Heart right ventricle (tissue), 16 donors: ENCODE measurements at regions of chr2 and their contacts with region 1.

Region 1: DNA sequence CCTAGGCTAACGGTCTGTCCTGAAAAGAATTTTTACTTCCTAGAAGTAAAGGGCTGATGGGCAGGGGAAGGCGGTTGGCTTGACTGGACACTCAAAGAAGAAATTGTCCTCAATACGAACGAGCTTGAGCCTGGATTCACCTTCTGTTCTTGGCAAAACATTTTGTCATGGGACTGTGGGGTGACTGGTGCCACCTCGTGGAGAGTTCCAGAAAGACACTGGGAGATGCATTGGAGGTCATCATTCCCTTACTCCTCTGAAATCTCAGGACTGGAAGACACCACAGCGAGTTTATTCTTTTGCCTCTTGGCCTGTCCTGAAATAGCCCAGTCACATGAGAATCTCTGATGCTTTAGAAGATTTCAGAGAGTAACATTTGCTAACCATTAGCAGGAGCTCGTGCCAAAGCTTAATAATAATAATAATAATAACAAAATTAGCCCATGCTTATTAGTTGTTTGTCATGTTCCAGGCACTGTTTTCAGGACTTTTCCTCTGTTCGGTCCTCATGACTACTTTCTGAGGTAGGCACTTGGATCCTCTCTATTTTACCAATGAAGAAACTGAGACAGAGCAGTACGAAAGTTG is 44.5 kb downstream of the TMEM182 start:
- DNase-seq: peak; percentile 48 to 78
- ATAC-seq: peak; percentile 51 to 70 (median 66)
- H3K4me3 ChIP-seq: no peak overlapping the region
- H3K27ac ChIP-seq: peak overlapping the region in 6 of 10 donors; percentile 1 to 46 (median 36)
- H3K4me1 ChIP-seq: peaks cover 0 to 60% (median 18%) of the 10 kb centered on the region in 9 donors
- H3K27me3 ChIP-seq: no peaks in the 10 kb centered on the region
- CTCF ChIP-seq: peak; percentile 54 to 87 (median 80)

Region 2: DNA sequence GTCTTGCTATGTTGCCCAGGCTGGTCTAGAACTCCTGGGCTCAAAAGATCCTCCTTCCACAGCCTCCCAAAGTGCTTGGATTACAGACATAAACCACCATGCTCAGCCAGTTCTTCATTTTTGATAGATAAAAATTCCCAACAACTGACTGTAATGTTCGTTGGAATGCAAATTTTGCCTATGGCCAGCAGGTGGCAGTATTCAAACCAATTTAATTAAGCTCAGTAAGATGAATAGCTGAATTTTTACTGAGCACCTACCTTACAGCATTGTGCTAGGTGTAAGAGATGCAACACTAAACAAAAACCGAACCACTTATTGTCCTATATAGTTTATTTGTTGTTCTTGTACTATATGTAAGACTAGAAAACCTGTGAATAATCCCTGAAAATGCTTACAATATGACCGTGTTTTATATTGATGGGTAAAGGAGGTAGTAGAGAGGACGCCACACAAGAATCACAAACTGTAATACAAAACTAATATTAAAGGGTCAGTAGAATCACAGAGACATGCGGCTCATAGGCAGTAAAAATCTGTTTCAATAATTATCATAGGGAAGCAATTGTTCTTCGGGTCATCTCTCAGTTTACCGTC is 52.7 kb before region 1 on chr2:
- intact Hi-C with region 1: loop called (anchors 1 to 5 kb)
- DNase-seq: no peak
- ATAC-seq: peak in 6 of 8 donors; percentile 20 to 73 (median 56)
- H3K4me3 ChIP-seq: no peak overlapping the region
- H3K27ac ChIP-seq: no peak overlapping the region
- H3K4me1 ChIP-seq: peaks cover 0 to 15% (median 6%) of the 10 kb centered on the region in 9 donors
- H3K27me3 ChIP-seq: no peaks in the 10 kb centered on the region
- CTCF ChIP-seq: peak; percentile 68 to 89 (median 81)

Region 3: GRCh38 chr2:102761763-102762162 is 44.6 kb before region 1 on chr2 and contains the start of gene TMEM182:
- intact Hi-C with region 1: loop called in 4 of 10 experiments (anchors 2 to 5 kb)
- DNase-seq: peak; percentile 58 to 72
- ATAC-seq: peak; percentile 87 to 96 (median 92)
- H3K4me3 ChIP-seq: peak within 1 kb of the TSS; percentile 13 to 55 (median 44)
- H3K27ac ChIP-seq: peak within 1 kb of the TSS; percentile 36 to 88 (median 73)
- H3K4me1 ChIP-seq: peaks cover 0 to 54% (median 28%) of the 10 kb centered on the region in 9 donors
- H3K27me3 ChIP-seq: no peaks in the 10 kb centered on the region
- CTCF ChIP-seq: no peak
- total RNA-seq, gene TMEM182: 142 to 225 (median 191) TPM